CD4-positive, alpha-beta memory T cell (primary cell): ENCODE measurements at regions of chr15 and their contacts with region 1.

Region 1: GRCh38 chr15:40421246-40422157 is 15.9 kb downstream of the IVD start:
- DNase-seq: peak; percentile 73 to 77 (median 74)
- H3K4me3 ChIP-seq: no peak overlapping the region
- H3K4me3 Mint-ChIP-seq: no peak overlapping the region
- H3K27ac ChIP-seq: no peak overlapping the region
- H3K27ac Mint-ChIP-seq: peak overlapping the region in 1 of 7 donors; percentile 40
- H3K4me1 ChIP-seq: peaks cover 8% of the 10 kb centered on the region
- H3K4me1 Mint-ChIP-seq: peaks cover 0 to 5% (median 0%) of the 10 kb centered on the region in 4 donors
- H3K27me3 ChIP-seq: no peaks in the 10 kb centered on the region
- H3K27me3 Mint-ChIP-seq: no peaks in the 10 kb centered on the region

Region 2: DNA sequence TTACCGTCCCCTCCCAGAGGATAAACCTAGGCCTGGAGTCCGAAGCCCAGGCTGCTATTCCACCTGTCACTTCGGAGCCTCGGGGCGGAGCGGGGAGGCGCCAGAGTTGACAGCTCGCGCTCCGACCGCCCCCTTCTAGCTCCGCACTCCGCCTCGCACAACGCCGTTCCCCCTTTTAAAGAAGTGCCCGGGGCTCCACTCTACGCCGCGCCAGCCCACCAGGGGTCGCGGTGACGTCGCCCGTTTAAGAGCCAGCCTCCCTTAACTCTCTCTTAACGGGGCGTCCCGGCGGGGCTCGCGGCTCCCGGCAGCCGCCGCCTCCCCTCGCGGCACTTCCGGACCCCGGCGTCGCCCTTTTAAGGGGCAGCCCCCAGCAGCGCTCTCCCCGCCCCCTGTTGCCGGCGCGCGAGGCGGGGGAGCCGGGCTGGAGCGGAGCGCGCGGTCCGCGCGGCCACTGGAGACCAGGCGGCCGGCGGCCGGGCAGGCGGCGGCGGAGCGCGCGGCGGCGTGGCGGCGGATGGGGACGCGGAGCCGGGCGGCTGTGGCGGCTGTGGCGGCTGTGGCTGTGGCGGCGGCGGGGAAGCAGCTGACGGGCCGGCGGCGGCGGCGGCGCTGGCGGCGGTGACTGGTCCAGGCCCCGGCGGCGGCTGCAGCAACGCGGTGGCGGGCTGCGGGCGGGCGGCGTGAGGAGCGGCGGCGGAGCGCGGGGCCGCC is 98.1 kb before region 1 on chr15 and contains the start of gene INAFM2:
- CTCF ChIA-PET with region 1: interaction called, 20 read pairs
- POLR2A ChIA-PET with region 1: no interaction called
- intact Hi-C with region 1: loop called (anchors 1 kb)
- DNase-seq: peak; percentile 88 to 90 (median 89)
- H3K4me3 ChIP-seq: peak within 1 kb of the TSS in 1 of 2 donors; percentile 56
- H3K4me3 Mint-ChIP-seq: peak within 1 kb of the TSS; percentile 79 to 89 (median 86)
- H3K27ac ChIP-seq: peak within 1 kb of the TSS; percentile 29
- H3K27ac Mint-ChIP-seq: peak within 1 kb of the TSS; percentile 36 to 93 (median 88)
- H3K4me1 ChIP-seq: peaks cover 22% of the 10 kb centered on the region
- H3K4me1 Mint-ChIP-seq: peaks cover 16 to 35% (median 25%) of the 10 kb centered on the region in 4 donors
- H3K27me3 ChIP-seq: no peaks in the 10 kb centered on the region
- H3K27me3 Mint-ChIP-seq: peaks cover 0 to 7% of the 10 kb centered on the region in 2 donors
- total RNA-seq, gene INAFM2: 7.2 to 7.5 TPM

Region 3: DNA sequence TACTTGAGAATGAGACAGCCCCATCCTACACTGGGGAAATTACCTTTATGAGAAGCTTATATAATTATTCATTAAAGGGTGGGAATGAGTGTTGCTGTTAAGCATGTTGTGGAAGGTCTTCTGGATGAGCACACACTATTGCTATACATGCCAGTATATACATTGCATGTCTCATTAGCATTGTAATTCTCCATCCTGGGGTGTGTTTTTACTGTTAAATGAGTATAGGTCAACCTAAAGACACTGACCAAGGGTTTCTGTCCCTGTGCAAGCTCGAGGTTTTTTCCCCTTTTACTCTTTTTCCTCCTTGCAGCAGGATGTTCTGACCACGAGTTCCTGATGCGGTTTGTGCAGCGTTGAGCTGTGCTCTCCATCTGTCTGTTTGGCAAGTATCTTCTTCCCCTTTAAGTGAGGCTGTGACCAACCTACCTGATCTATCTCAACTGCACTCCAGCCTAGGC is 23.1 kb before region 1 on chr15:
- CTCF ChIA-PET with region 1: interaction called, 13 read pairs
- POLR2A ChIA-PET with region 1: no interaction called
- intact Hi-C with region 1: no loop called
- DNase-seq: no peak
- H3K4me3 ChIP-seq: peak overlapping the region in 1 of 2 donors; percentile 5
- H3K4me3 Mint-ChIP-seq: peak overlapping the region; percentile 37 to 83 (median 66)
- H3K27ac ChIP-seq: no peak overlapping the region
- H3K27ac Mint-ChIP-seq: peak overlapping the region in 6 of 7 donors; percentile 5 to 88 (median 50)
- H3K4me1 ChIP-seq: peaks cover 14% of the 10 kb centered on the region
- H3K4me1 Mint-ChIP-seq: peaks cover 9 to 26% (median 14%) of the 10 kb centered on the region in 4 donors
- H3K27me3 ChIP-seq: no peaks in the 10 kb centered on the region
- H3K27me3 Mint-ChIP-seq: no peaks in the 10 kb centered on the region

Region 4: DNA sequence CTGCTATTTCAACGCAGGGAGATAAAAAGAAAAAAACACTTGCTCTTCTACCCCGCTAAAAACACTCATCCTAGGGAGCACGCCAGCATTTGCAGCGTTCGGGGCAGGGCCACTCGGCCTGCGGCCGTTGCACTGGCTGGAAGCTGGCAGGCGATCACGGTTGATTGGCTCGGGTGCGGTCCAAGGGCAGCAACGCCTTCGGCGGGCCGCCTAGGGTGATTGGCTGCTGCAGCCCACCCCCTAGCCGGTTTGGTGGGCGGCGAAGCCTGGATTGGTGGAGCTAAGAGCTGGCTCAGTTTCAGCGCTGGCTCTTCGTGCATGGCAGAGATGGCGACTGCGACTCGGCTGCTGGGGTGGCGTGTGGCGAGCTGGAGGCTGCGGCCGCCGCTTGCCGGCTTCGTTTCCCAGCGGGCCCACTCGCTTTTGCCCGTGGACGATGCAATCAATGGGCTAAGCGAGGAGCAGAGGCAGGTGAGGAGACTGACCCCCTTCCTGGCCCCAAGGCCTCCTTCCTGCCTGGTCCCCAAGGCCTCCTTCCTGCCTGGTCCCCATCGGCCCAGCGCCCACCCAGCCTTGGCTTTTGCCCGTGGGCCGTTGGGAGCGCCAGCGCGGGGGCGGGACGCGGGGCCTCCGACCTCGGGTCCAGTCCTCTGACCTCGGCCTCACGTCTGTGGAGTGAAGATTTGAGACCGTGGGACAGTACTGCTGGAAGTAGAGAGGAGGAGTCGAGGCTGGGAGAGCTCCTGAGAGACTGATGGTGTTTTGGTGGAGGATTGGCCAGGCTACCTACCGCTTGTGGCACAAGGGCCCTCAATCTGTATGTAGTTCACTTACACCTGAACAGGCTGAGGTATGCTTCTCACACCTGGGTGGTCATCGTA is 15.8 kb before region 1 on chr15 and contains the start of gene IVD:
- CTCF ChIA-PET with region 1: interaction called, 12 read pairs
- POLR2A ChIA-PET with region 1: interaction called, 5 read pairs
- intact Hi-C with region 1: no loop called
- DNase-seq: peak; percentile 78 to 82 (median 80)
- H3K4me3 ChIP-seq: peak within 1 kb of the TSS; percentile 42 to 63
- H3K4me3 Mint-ChIP-seq: peak within 1 kb of the TSS; percentile 82 to 98 (median 90)
- H3K27ac ChIP-seq: peak within 1 kb of the TSS; percentile 61
- H3K27ac Mint-ChIP-seq: peak within 1 kb of the TSS; percentile 62 to 92 (median 86)
- H3K4me1 ChIP-seq: peaks cover 25% of the 10 kb centered on the region
- H3K4me1 Mint-ChIP-seq: peaks cover 24 to 35% (median 30%) of the 10 kb centered on the region in 4 donors
- H3K27me3 ChIP-seq: no peaks in the 10 kb centered on the region
- H3K27me3 Mint-ChIP-seq: no peaks in the 10 kb centered on the region
- total RNA-seq, gene IVD: 56.4 to 62.2 TPM